ENCODE measurements at regions of chr5 and their contacts with region 1.

Region 1: DNA sequence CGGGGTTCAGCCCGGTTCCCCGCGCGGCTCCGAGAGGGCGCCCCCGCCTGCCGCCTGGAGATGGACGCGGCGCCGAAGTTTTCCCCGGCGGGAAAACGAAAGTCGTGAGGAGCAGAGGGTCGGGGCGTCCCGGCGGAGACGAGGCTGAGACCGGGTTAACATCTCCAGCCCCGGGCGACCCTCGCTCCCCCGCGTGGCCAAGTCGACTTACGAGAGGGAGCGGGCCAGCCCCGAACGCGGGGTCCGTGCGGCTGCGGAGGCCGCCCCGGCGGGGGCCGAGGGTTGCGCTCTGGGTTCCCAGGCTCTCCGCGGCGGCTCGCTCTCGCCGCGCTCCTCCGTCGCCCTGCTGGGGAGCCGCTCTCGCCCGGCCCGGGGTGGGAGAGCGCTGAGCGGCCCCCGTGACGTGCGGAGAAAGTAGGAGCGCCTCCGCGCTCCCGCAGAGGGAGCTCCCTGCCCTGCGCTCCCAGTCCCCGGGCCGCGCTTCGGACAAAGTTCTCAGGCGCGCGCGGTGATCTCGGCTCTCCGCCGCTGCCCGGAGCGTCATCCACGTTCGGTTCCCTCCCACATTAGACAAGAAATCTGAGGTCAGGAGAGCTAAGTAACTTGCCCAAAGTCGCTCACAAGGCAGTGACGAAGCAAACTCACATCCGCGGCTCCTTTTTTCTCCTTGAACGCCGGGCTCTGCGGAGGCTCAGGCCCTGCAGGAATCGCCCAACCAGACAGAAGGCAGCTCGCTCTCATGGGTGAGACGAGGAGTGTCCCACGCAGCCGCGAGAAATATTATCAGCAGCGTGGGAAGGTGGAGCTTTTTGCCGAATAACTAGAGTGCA is 1.2 kb upstream of the GCNT4 start:
- DNase-seq: peak; percentile 43 to 83 (median 59)
- ATAC-seq: peak; percentile 45
- H3K4me3 ChIP-seq: peak overlapping the region; percentile 68
- H3K4me3 Mint-ChIP-seq: peak overlapping the region; percentile 95
- H3K27ac ChIP-seq: peak overlapping the region; percentile 69 to 89
- H3K27ac Mint-ChIP-seq: peak overlapping the region; percentile 94
- H3K4me1 ChIP-seq: peaks cover 75% of the 10 kb centered on the region
- H3K4me1 Mint-ChIP-seq: peaks cover 85% of the 10 kb centered on the region
- H3K27me3 ChIP-seq: no peaks in the 10 kb centered on the region
- H3K27me3 Mint-ChIP-seq: no peaks in the 10 kb centered on the region
- CTCF ChIP-seq: no peak

Region 2: GRCh38 chr5:75016896-75017295 is 36.6 kb before region 1 on chr5:
- CTCF ChIA-PET with region 1: no interaction called
- POLR2A ChIA-PET with region 1: no interaction called
- intact Hi-C with region 1: no loop called
- DNase-seq: no peak
- ATAC-seq: no peak
- H3K4me3 ChIP-seq: no peak overlapping the region
- H3K4me3 Mint-ChIP-seq: no peak overlapping the region
- H3K27ac ChIP-seq: no peak overlapping the region
- H3K27ac Mint-ChIP-seq: no peak overlapping the region
- H3K4me1 ChIP-seq: no peaks in the 10 kb centered on the region
- H3K4me1 Mint-ChIP-seq: no peaks in the 10 kb centered on the region
- H3K27me3 ChIP-seq: no peaks in the 10 kb centered on the region
- H3K27me3 Mint-ChIP-seq: no peaks in the 10 kb centered on the region
- CTCF ChIP-seq: no peak

Region 3: GRCh38 chr5:75034137-75034750 is 19.3 kb before region 1 on chr5:
- CTCF ChIA-PET with region 1: interaction called, 4 read pairs
- POLR2A ChIA-PET with region 1: interaction called, 22 read pairs
- intact Hi-C with region 1: no loop called
- DNase-seq: peak in 10 of 14 experiments; percentile 5 to 84 (median 46)
- ATAC-seq: peak; percentile 83
- H3K4me3 ChIP-seq: no peak overlapping the region
- H3K4me3 Mint-ChIP-seq: peak overlapping the region; percentile 46
- H3K27ac ChIP-seq: no peak overlapping the region
- H3K27ac Mint-ChIP-seq: peak overlapping the region; percentile 77
- H3K4me1 ChIP-seq: peaks cover 27% of the 10 kb centered on the region
- H3K4me1 Mint-ChIP-seq: peaks cover 86% of the 10 kb centered on the region
- H3K27me3 ChIP-seq: no peaks in the 10 kb centered on the region
- H3K27me3 Mint-ChIP-seq: no peaks in the 10 kb centered on the region
- CTCF ChIP-seq: no peak

Region 4: GRCh38 chr5:75108931-75109596 is 55.5 kb after region 1 on chr5:
- CTCF ChIA-PET with region 1: interaction called, 3 read pairs
- POLR2A ChIA-PET with region 1: interaction called, 12 read pairs
- intact Hi-C with region 1: loop called (anchors 5 kb)
- DNase-seq: peak in 2 of 14 experiments; percentile 35 to 44
- ATAC-seq: peak; percentile 68
- H3K4me3 ChIP-seq: no peak overlapping the region
- H3K4me3 Mint-ChIP-seq: no peak overlapping the region
- H3K27ac ChIP-seq: no peak overlapping the region
- H3K27ac Mint-ChIP-seq: peak overlapping the region; percentile 17
- H3K4me1 ChIP-seq: peaks cover 5% of the 10 kb centered on the region
- H3K4me1 Mint-ChIP-seq: peaks cover 31% of the 10 kb centered on the region
- H3K27me3 ChIP-seq: no peaks in the 10 kb centered on the region
- H3K27me3 Mint-ChIP-seq: no peaks in the 10 kb centered on the region
- CTCF ChIP-seq: no peak

Region 5: GRCh38 chr5:75265731-75266130 is 212.2 kb after region 1 on chr5:
- CTCF ChIA-PET with region 1: interaction called, 4 read pairs
- POLR2A ChIA-PET with region 1: no interaction called
- intact Hi-C with region 1: loop called (anchors 1 kb)
- DNase-seq: peak in 3 of 14 experiments; percentile 57 to 68 (median 65)
- ATAC-seq: peak; percentile 74
- H3K4me3 ChIP-seq: no peak overlapping the region
- H3K4me3 Mint-ChIP-seq: no peak overlapping the region
- H3K27ac ChIP-seq: no peak overlapping the region
- H3K27ac Mint-ChIP-seq: no peak overlapping the region
- H3K4me1 ChIP-seq: no peaks in the 10 kb centered on the region
- H3K4me1 Mint-ChIP-seq: no peaks in the 10 kb centered on the region
- H3K27me3 ChIP-seq: no peaks in the 10 kb centered on the region
- H3K27me3 Mint-ChIP-seq: peaks cover 11% of the 10 kb centered on the region
- CTCF ChIP-seq: peak; percentile 78

Region 6: GRCh38 chr5:75511435-75512384 is 458.2 kb after region 1 on chr5 and contains the starts of genes CERT1 and POLK:
- CTCF ChIA-PET with region 1: no interaction called
- POLR2A ChIA-PET with region 1: no interaction called
- intact Hi-C with region 1: loop called in 1 of 2 experiments (anchors 10 kb)
- DNase-seq: peak; percentile 83 to 98 (median 90)
- ATAC-seq: peak; percentile 88
- H3K4me3 ChIP-seq: peak within 1 kb of the TSS; percentile 92
- H3K4me3 Mint-ChIP-seq: peak within 1 kb of the TSS; percentile 96
- H3K27ac ChIP-seq: peak within 1 kb of the TSS; percentile 78
- H3K27ac Mint-ChIP-seq: peak within 1 kb of the TSS; percentile 99
- H3K4me1 ChIP-seq: peaks cover 17% of the 10 kb centered on the region
- H3K4me1 Mint-ChIP-seq: peaks cover 65% of the 10 kb centered on the region
- H3K27me3 ChIP-seq: no peaks in the 10 kb centered on the region
- H3K27me3 Mint-ChIP-seq: no peaks in the 10 kb centered on the region
- CTCF ChIP-seq: no peak
- total RNA-seq, gene CERT1: 26.5 to 28.7 TPM
- total RNA-seq, gene POLK: 10.0 to 10.3 TPM

Region 7: DNA sequence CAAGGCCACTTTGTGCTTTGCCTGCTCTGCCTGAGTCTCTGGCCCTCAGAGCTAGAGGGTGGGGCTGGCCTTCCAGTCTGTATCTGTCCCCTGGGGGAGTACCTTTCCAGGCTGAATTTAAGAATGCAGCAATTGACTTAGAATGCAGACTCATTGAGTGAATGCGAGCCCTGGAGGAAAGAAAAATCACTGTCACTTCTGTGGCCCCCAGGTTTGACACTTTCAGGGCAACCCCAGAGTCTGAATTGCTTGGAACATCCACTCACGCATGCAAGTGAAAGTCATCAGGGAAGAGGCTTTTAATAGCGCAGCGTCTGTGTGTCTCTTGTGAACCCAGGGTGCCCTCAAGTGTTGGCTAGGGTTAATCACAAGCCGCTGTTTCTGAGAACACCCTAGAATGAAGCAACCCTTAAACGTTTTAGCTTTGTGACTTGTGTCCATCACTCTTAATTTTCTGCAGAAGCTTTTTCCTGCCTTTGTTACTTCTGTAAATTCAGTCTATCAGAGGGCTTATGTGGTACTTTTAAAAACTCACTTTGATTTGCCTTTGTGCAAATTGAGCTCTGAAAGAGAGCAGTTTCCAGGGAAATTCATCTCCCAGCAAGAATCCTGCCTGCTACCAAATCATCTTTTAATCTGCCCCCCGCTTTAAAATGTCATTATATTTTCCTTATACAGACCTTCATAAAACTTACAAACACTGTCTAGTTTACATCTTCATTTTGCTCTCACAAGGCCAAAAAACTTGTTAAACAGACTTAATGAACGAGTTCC is 1202.8 kb after region 1 on chr5:
- CTCF ChIA-PET with region 1: no interaction called
- POLR2A ChIA-PET with region 1: no interaction called
- intact Hi-C with region 1: loop called in 1 of 2 experiments (anchors 2 kb)
- DNase-seq: peak; percentile 38 to 84 (median 49)
- ATAC-seq: peak; percentile 99
- H3K4me3 ChIP-seq: no peak overlapping the region
- H3K4me3 Mint-ChIP-seq: no peak overlapping the region
- H3K27ac ChIP-seq: no peak overlapping the region
- H3K27ac Mint-ChIP-seq: no peak overlapping the region
- H3K4me1 ChIP-seq: peaks cover 4% of the 10 kb centered on the region
- H3K4me1 Mint-ChIP-seq: peaks cover 7% of the 10 kb centered on the region
- H3K27me3 ChIP-seq: no peaks in the 10 kb centered on the region
- H3K27me3 Mint-ChIP-seq: no peaks in the 10 kb centered on the region
- CTCF ChIP-seq: peak; percentile 78